ENCODE measurements at regions of chr1 and their contacts with region 1.

Region 1: GRCh38 chr1:247506831-247507230 is 29.4 kb downstream of the OR2C3 start:
- DNase-seq: no peak
- H3K4me3 ChIP-seq: no peak overlapping the region
- H3K4me3 Mint-ChIP-seq: no peak overlapping the region
- H3K27ac Mint-ChIP-seq: no peak overlapping the region
- H3K4me1 ChIP-seq: no peaks in the 10 kb centered on the region
- H3K4me1 Mint-ChIP-seq: no peaks in the 10 kb centered on the region
- H3K27me3 ChIP-seq: no peaks in the 10 kb centered on the region
- H3K27me3 Mint-ChIP-seq: peaks cover 6% of the 10 kb centered on the region
- CTCF ChIP-seq: no peak

Region 2: DNA sequence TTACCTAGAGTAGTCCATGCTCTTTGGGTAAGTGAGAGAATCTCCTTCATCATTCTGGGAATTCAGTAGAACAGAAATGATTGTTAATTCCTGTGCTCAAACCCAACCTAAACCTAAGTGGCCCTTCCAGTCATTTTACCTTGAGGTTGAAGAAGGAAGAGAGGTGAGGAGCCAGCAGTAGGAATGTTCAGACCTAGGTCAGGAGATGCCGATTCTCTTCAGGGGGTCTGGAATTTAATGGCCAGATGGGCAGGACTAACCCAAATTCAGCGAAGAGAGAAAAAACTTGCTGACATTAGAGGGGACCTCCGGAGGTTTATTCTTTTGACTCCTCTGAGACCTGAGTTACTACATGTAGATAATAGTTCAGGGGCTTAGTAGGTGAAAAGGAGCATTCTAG is 32.5 kb before region 1 on chr1:
- CTCF ChIA-PET with region 1: no interaction called
- POLR2A ChIA-PET with region 1: no interaction called
- intact Hi-C with region 1: loop called (anchors 1 kb)
- DNase-seq: no peak
- H3K4me3 ChIP-seq: no peak overlapping the region
- H3K4me3 Mint-ChIP-seq: no peak overlapping the region
- H3K27ac Mint-ChIP-seq: no peak overlapping the region
- H3K4me1 ChIP-seq: no peaks in the 10 kb centered on the region
- H3K4me1 Mint-ChIP-seq: no peaks in the 10 kb centered on the region
- H3K27me3 ChIP-seq: no peaks in the 10 kb centered on the region
- H3K27me3 Mint-ChIP-seq: peaks cover 4% of the 10 kb centered on the region
- CTCF ChIP-seq: no peak

Measured in Caco-2 (cell line).